ENCODE measurements at regions of chr16 and their contacts with region 1.

Region 1: GRCh38 chr16:4253394-4254150 is 11.7 kb upstream of the SRL start:
- DNase-seq: peak; percentile 100
- ATAC-seq: peak; percentile 99
- H3K4me3 Mint-ChIP-seq: peak overlapping the region; percentile 90
- H3K27ac Mint-ChIP-seq: peak overlapping the region; percentile 98
- H3K4me1 Mint-ChIP-seq: peaks cover 5% of the 10 kb centered on the region
- H3K27me3 Mint-ChIP-seq: no peaks in the 10 kb centered on the region

Region 2: DNA sequence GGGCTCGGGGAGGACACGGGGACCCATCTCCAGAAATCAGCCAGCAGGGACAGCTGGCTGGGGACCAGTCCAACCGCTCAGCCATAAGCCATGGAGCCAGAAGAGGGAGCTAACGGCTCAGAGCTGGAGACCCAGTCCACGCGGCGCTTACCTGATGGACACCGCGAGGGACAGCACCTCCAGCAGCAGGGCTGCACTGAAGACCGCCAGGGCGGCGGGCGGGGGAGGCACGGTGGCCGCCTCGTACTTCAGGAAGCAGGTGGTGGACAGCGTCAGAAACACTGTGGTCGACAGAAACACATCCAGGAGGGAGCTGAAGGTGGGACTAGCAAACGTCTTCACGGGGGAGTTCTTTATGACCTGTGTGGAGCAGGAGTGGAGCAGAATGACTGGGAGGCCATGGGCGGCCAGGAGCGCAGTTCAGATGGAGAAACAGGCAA is 270.5 kb before region 1 on chr16:
- CTCF ChIA-PET with region 1: interaction called, 46 read pairs
- DNase-seq: peak; percentile 65
- ATAC-seq: peak; percentile 75
- H3K4me3 Mint-ChIP-seq: no peak overlapping the region
- H3K27ac Mint-ChIP-seq: no peak overlapping the region
- H3K4me1 Mint-ChIP-seq: peaks cover 3% of the 10 kb centered on the region
- H3K27me3 Mint-ChIP-seq: no peaks in the 10 kb centered on the region

Region 3: DNA sequence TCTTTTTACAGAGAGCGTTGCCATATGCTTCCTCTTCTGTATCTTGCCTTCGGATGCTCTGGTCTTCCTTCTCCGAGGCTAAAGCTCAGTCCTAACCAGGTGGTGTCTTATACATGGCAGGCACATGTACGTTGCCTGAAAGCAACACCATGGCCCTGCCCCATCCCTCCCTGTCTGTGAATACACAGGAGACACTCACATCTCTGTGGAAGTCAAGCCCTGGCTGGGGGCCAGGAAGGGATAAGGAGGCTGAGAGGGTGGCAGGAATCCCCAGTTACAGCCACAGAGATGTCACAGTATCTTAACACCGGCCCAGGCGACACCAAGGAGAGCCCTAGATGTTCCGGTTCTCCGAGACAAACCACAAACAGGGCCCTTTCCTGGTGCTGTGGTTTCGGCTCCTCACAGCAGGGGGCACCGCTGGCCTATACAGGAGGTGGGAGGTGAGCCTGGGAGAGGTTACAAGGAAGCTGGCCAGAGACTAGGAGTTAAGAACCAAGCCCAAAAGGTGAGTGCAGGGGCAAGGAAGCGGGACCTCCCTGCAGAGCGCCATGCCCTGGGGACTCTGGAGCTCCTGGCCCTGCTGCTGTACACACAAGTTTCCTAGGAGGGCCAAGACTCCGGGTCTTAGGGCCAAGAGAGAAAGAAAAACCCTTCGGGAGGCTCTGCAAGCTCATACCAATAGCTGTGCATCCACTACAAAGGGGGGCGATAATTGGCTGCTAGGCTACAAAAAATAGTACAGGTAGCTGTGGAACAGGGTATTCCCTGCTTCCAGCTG is 53.4 kb before region 1 on chr16:
- CTCF ChIA-PET with region 1: interaction called, 18 read pairs
- DNase-seq: peak; percentile 55
- ATAC-seq: peak; percentile 57
- H3K4me3 Mint-ChIP-seq: no peak overlapping the region
- H3K27ac Mint-ChIP-seq: no peak overlapping the region
- H3K4me1 Mint-ChIP-seq: peaks cover 7% of the 10 kb centered on the region
- H3K27me3 Mint-ChIP-seq: peaks cover 10% of the 10 kb centered on the region

Region 4: GRCh38 chr16:4307215-4308037 is 53.9 kb after region 1 on chr16:
- CTCF ChIA-PET with region 1: interaction called, 13 read pairs
- DNase-seq: peak; percentile 98
- ATAC-seq: peak; percentile 94
- H3K4me3 Mint-ChIP-seq: peak overlapping the region; percentile 96
- H3K27ac Mint-ChIP-seq: peak overlapping the region; percentile 97
- H3K4me1 Mint-ChIP-seq: peaks cover 22% of the 10 kb centered on the region
- H3K27me3 Mint-ChIP-seq: no peaks in the 10 kb centered on the region